Activated CD4-positive, alpha-beta memory T cell treated with anti-CD3 and anti-CD28 coated beads for 36 hours (primary cell): ENCODE measurements at regions of chr14 and their contacts with region 1.

Region 1: GRCh38 chr14:35320472-35320871 is 28.3 kb downstream of the PSMA6 start:
- DNase-seq: no peak
- H3K4me3 Mint-ChIP-seq: no peak overlapping the region
- H3K27ac Mint-ChIP-seq: no peak overlapping the region
- H3K4me1 Mint-ChIP-seq: no peaks in the 10 kb centered on the region
- H3K27me3 Mint-ChIP-seq: no peaks in the 10 kb centered on the region

Region 2: DNA sequence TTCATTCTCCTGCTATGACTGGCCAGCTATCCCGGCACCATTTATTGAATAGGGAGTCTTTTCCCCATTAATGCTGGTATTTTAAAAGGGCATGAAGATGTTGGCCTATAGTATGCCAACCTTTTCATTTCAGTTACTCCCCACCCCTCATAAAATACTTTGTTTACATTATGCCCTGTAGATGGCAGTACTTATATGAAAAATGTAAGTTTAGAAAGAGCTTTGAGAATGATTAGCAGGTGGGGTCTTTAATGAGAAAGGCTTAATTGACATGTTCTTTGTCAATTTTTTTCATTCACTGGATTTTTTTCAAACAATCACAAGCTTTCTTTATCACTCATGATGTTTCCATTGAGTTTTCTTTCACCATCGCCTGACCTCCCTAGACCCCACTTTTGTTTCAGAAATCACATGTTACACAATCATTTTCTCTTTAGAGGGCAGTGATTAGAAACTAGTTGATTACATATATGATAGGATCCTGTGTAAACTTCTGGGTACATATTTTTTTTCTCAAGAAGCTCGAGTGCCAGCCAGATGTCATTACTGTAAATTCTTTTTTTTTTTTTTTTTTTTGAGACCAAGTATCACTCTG is 90.9 kb before region 1 on chr14:
- CTCF ChIA-PET with region 1: interaction called, 12 read pairs
- POLR2A ChIA-PET with region 1: interaction called, 5 read pairs
- intact Hi-C with region 1: no loop called
- DNase-seq: no peak
- H3K4me3 Mint-ChIP-seq: no peak overlapping the region
- H3K27ac Mint-ChIP-seq: peak overlapping the region; percentile 26
- H3K4me1 Mint-ChIP-seq: peaks cover 23% of the 10 kb centered on the region
- H3K27me3 Mint-ChIP-seq: no peaks in the 10 kb centered on the region

Region 3: GRCh38 chr14:35331605-35332516 is 11.4 kb after region 1 on chr14:
- CTCF ChIA-PET with region 1: no interaction called
- POLR2A ChIA-PET with region 1: interaction called, 20 read pairs
- intact Hi-C with region 1: loop called (anchors 1 kb)
- DNase-seq: no peak
- H3K4me3 Mint-ChIP-seq: no peak overlapping the region
- H3K27ac Mint-ChIP-seq: peak overlapping the region; percentile 95
- H3K4me1 Mint-ChIP-seq: peaks cover 30% of the 10 kb centered on the region
- H3K27me3 Mint-ChIP-seq: no peaks in the 10 kb centered on the region

Region 4: DNA sequence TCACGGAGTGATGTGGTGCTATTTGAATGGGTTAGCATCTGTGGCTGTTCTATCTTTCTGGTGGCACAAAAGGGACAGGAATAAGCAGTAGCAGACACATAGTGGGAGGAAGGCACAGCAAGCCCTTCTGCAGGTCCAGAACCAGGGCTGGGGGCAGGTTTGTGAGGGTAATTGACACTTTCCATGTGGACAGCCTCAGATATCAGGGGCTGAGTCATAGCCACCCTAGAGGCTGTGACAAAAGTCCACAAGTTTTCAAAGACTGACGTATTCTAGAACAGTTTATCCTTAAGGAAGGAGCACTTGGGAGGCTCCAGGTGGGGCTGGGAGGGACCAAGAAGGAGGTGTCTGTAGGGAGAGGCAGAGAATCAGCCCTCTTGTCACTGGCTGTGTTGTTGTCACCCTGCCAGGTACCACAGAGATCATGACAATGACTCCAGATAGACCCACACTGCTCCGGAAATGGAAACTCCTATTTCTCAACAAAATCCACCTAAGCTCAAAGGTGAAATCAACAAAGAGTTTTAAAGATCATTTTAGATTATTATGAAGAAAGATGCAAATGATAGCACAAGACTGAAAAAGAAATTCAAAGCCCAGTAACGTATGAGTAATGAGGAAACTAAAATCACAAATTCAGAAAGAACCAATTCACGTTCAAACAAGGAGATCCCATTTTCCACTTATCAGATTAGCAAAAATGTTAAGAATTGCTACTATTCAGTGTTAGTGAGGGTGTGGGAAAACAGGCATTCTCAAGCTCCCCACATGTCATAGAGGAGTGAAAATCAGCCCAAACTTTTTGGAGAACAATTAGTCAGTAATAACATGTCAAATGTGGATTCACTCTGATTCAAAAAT is 35.7 kb after region 1 on chr14:
- CTCF ChIA-PET with region 1: no interaction called
- POLR2A ChIA-PET with region 1: interaction called, 21 read pairs
- intact Hi-C with region 1: loop called (anchors 1 kb)
- DNase-seq: peak; percentile 76
- H3K4me3 Mint-ChIP-seq: peak overlapping the region; percentile 17
- H3K27ac Mint-ChIP-seq: peak overlapping the region; percentile 79
- H3K4me1 Mint-ChIP-seq: peaks cover 40% of the 10 kb centered on the region
- H3K27me3 Mint-ChIP-seq: no peaks in the 10 kb centered on the region

Region 5: DNA sequence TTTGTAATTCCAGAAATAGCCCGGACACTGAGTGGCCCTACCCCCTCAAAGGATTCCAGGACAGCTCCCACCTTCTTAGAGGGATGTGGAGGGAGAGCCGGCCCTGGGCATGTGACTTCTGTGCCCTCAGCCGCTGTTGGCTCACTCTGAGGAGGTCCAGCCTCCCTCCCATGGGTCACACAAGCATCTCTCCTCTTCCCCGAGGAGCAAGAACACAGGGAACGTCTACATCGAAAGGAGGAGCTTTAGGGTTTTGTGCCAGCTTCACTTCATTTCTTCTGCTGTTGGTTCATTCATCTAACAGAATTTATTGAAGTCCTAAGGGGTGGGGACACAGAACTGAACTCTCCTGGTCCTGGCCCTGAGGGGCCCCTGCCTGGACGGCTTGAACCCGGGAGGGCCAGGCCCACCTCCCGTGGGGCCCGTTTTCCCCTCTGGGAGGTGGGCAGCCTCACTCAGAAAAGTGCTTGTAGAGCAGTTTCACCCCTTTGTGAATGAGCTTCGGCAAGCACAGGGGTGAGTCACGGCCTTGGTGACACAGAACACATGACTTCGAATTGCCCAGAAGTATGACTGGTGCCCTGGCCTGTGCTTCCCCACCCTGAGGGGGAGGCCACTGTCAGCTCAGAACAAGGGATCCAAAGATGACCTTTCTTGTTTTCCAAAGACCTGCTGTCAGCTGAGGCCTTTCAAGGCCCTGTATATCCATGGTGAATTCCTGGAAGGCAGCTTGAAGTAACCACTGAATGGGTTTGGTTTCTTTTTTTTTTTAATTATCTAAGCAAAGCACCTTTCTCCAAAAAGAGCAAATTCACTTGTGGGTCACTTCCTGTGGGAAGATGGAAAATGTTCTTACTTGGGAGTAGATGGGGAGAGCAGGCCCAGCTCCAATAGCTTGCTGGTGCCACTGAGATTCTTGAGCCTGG is 44.9 kb after region 1 on chr14:
- CTCF ChIA-PET with region 1: no interaction called
- POLR2A ChIA-PET with region 1: interaction called, 23 read pairs
- intact Hi-C with region 1: no loop called
- DNase-seq: peak; percentile 94
- H3K4me3 Mint-ChIP-seq: peak overlapping the region; percentile 56
- H3K27ac Mint-ChIP-seq: peak overlapping the region; percentile 96
- H3K4me1 Mint-ChIP-seq: peaks cover 48% of the 10 kb centered on the region
- H3K27me3 Mint-ChIP-seq: no peaks in the 10 kb centered on the region

Region 6: DNA sequence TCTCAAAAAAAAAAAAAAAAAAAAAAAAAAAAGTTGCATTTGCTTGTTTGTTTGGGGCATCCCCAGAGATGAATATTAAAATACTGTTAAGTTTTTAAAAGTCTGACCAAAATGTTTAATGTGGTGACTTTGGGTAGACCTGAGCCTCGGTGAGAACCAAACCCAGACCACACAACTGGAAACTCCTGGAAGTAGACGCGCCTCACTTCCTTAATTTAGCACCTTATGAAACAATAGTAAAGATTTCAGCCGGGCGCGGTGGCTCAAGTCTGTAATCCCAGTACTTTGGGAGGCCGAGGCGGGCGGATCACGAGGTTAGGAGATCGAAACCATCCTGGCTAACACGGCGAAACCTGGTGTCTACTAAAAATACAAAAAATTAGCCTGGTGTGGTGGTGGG is 74.8 kb after region 1 on chr14:
- CTCF ChIA-PET with region 1: no interaction called
- POLR2A ChIA-PET with region 1: interaction called, 14 read pairs
- intact Hi-C with region 1: loop called (anchors 2 kb)
- DNase-seq: no peak
- H3K4me3 Mint-ChIP-seq: no peak overlapping the region
- H3K27ac Mint-ChIP-seq: no peak overlapping the region
- H3K4me1 Mint-ChIP-seq: peaks cover 25% of the 10 kb centered on the region
- H3K27me3 Mint-ChIP-seq: no peaks in the 10 kb centered on the region